Activated CD8-positive, alpha-beta memory T cell treated with anti-CD3 and anti-CD28 coated beads, Interleukin-2, amount 10 ng/mL, durations not matched to agents 7 days and 5 days (primary cell): ENCODE measurements at regions of chr6 and their contacts with region 1.

Region 1: GRCh38 chr6:35240840-35241801 is 18.4 kb upstream of the ZNF76 start:
- DNase-seq: peak; percentile 83
- ATAC-seq: peak; percentile 85
- H3K4me3 Mint-ChIP-seq: no peak overlapping the region
- H3K27ac Mint-ChIP-seq: no peak overlapping the region
- H3K4me1 Mint-ChIP-seq: peaks cover 10% of the 10 kb centered on the region
- H3K27me3 Mint-ChIP-seq: no peaks in the 10 kb centered on the region

Region 2: DNA sequence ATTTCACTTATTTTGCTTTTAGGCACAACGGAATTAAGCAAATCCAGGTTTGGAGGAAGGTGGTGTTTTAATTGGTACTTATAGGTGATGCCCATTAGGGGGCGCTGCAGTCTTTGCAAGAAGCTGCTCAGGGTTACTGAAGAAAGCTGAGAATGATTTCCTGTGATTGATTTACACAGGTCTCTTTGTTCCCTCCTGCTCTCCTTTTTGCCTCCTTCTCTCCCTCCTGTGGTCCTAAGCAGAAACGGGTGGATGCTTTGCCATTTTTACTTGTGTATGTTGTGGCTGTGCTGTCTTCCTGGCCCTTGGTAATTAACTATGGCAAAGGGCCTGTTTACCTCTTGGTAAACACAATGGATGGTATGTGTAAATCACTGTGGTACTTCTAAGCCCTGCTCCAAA is 254.3 kb before region 1 on chr6:
- CTCF ChIA-PET with region 1: interaction called, 20 read pairs
- DNase-seq: peak; percentile 70
- ATAC-seq: peak; percentile 73
- H3K4me3 Mint-ChIP-seq: no peak overlapping the region
- H3K27ac Mint-ChIP-seq: no peak overlapping the region
- H3K4me1 Mint-ChIP-seq: peaks cover 3% of the 10 kb centered on the region
- H3K27me3 Mint-ChIP-seq: no peaks in the 10 kb centered on the region

Region 3: DNA sequence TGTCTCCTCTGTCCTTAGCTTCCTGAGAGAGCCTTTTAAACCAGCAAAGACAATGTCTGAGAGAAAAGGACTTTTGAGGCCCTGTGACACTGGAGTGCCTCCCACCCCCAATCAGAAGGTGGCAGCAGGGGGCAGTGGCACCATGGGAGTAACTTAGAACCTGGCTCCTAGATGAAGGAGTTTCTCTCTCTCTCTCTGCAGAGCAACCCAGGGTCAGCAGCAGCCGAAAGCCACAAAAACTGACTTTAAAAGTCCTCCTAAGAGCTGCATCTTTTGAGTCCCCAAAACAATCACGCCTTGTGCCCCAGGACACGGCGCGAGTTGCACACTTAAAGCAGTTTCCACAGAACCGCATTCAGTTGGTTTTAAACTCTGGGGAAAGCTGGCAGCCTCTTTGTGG is 94.7 kb before region 1 on chr6:
- CTCF ChIA-PET with region 1: interaction called, 52 read pairs
- DNase-seq: peak; percentile 70
- ATAC-seq: no peak
- H3K4me3 Mint-ChIP-seq: no peak overlapping the region
- H3K27ac Mint-ChIP-seq: no peak overlapping the region
- H3K4me1 Mint-ChIP-seq: peaks cover 42% of the 10 kb centered on the region
- H3K27me3 Mint-ChIP-seq: peaks cover 18% of the 10 kb centered on the region

Region 4: GRCh38 chr6:35213824-35214756 is 27.0 kb before region 1 on chr6 and contains the start of gene SCUBE3:
- CTCF ChIA-PET with region 1: interaction called, 63 read pairs
- DNase-seq: no peak
- ATAC-seq: peak; percentile 72
- H3K4me3 Mint-ChIP-seq: peak within 1 kb of the TSS; percentile 38
- H3K27ac Mint-ChIP-seq: no peak within 1 kb of the TSS
- H3K4me1 Mint-ChIP-seq: peaks cover 6% of the 10 kb centered on the region
- H3K27me3 Mint-ChIP-seq: peaks cover 71% of the 10 kb centered on the region
- total RNA-seq, gene SCUBE3: 0.12 to 0.54 TPM

Region 5: GRCh38 chr6:35259194-35259947 is 18.2 kb after region 1 on chr6 and contains the start of gene ZNF76:
- CTCF ChIA-PET with region 1: interaction called, 35 read pairs
- DNase-seq: peak; percentile 94
- ATAC-seq: peak; percentile 90
- H3K4me3 Mint-ChIP-seq: peak within 1 kb of the TSS; percentile 92
- H3K27ac Mint-ChIP-seq: peak within 1 kb of the TSS; percentile 91
- H3K4me1 Mint-ChIP-seq: peaks cover 45% of the 10 kb centered on the region
- H3K27me3 Mint-ChIP-seq: no peaks in the 10 kb centered on the region
- total RNA-seq, gene ZNF76: 55.0 to 61.8 TPM

Region 6: DNA sequence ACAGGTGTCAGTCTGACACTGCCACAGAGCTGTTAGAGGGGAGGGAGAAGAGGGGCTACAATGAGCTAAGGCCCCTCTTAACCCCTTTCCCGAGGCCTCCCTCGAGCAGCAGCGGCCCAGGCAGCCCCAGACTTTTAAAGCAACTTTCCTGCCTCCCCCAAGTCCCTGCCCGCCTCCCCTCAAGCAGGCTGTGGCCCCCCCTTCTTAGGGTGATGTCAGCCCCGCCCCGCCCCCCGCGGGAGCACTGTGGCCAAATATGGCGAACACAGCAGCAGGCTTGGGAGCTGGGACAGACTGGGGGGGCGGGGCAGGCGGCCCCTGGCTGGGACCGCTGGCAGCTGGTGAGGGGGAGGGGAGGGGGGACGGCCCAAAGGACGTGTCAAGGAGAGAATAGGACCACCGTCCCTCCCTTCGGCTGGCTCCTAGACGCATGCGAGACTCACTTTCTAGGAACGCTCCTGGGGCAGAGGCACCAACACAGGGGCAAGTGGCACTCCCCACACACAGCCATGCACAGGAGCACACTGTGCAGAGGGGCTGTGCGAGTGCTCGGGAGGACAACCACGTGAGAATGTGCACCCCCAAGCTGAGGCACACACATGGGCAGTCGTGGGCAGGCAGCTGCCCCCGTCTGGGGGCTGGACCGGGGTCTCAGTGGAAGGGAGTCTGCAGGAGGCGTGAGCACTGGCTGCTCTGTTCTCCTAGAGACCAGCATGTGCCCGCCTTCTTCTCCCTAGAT is 249.0 kb after region 1 on chr6:
- CTCF ChIA-PET with region 1: no interaction called
- DNase-seq: no peak
- ATAC-seq: no peak
- H3K4me3 Mint-ChIP-seq: no peak overlapping the region
- H3K27ac Mint-ChIP-seq: no peak overlapping the region
- H3K4me1 Mint-ChIP-seq: peaks cover 13% of the 10 kb centered on the region
- H3K27me3 Mint-ChIP-seq: peaks cover 3% of the 10 kb centered on the region

Region 7: GRCh38 chr6:35552285-35552917 is 311.3 kb after region 1 on chr6:
- CTCF ChIA-PET with region 1: no interaction called
- DNase-seq: peak; percentile 78
- ATAC-seq: peak; percentile 53
- H3K4me3 Mint-ChIP-seq: no peak overlapping the region
- H3K27ac Mint-ChIP-seq: no peak overlapping the region
- H3K4me1 Mint-ChIP-seq: no peaks in the 10 kb centered on the region
- H3K27me3 Mint-ChIP-seq: peaks cover 14% of the 10 kb centered on the region